Breast epithelium (tissue), 4 donors: ENCODE measurements at regions of chr3 and their contacts with region 1.

Region 1: GRCh38 chr3:14590569-14590968 is 50.4 kb upstream of the GRIP2 start:
- DNase-seq: no peak
- H3K4me3 ChIP-seq: no peak overlapping the region
- H3K27ac ChIP-seq: no peak overlapping the region
- H3K4me1 ChIP-seq: no peaks in the 10 kb centered on the region
- H3K27me3 ChIP-seq: peaks cover 0 to 13% of the 10 kb centered on the region in 2 donors
- CTCF ChIP-seq: no peak
- POLR2A ChIP-seq: no peak

Region 2: DNA sequence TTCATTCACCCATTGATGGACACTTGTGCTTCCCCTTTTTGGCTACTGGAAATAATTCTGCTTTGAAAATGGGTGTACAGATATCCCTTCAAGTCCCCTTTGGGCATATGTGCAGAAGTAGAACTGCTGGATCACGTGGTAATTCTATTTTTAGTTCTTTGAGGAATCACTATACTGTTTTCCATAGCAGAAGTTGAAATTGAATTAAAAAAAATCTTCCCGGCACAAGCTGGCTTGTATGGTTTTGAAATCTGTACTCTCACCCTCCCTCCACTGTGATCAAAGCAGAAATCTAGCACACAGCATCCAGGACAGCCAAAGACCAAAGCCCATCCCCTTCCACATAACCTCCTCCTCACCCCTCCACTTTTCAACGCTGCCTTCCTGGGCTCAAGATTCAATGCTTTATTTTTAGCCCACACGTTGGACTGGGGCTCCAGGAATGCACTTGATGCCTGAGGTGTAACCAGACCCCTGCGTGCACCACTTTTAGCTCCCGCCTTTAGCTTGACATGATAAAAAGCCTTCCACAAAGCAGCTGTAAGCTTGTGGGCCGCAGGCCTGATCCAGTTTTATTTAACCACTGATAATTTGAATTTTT is 1861.4 kb before region 1 on chr3:
- intact Hi-C with region 1: loop called (anchors 5 kb)
- DNase-seq: no peak
- H3K4me3 ChIP-seq: no peak overlapping the region
- H3K27ac ChIP-seq: no peak overlapping the region
- H3K4me1 ChIP-seq: no peaks in the 10 kb centered on the region
- H3K27me3 ChIP-seq: no peaks in the 10 kb centered on the region
- CTCF ChIP-seq: no peak
- POLR2A ChIP-seq: no peak

Region 3: GRCh38 chr3:14371573-14372474 is 218.7 kb before region 1 on chr3:
- intact Hi-C with region 1: no loop called
- DNase-seq: peak; percentile 75 to 80
- H3K4me3 ChIP-seq: no peak overlapping the region
- H3K27ac ChIP-seq: peak overlapping the region; percentile 38 to 41
- H3K4me1 ChIP-seq: peaks cover 3 to 10% of the 10 kb centered on the region in 2 donors
- H3K27me3 ChIP-seq: no peaks in the 10 kb centered on the region
- CTCF ChIP-seq: no peak
- POLR2A ChIP-seq: no peak

Region 4: GRCh38 chr3:14616606-14617507 is 26.3 kb after region 1 on chr3:
- intact Hi-C with region 1: no loop called
- DNase-seq: no peak
- H3K4me3 ChIP-seq: no peak overlapping the region
- H3K27ac ChIP-seq: no peak overlapping the region
- H3K4me1 ChIP-seq: no peaks in the 10 kb centered on the region
- H3K27me3 ChIP-seq: no peaks in the 10 kb centered on the region
- CTCF ChIP-seq: no peak
- POLR2A ChIP-seq: no peak